Activated CD4-positive, alpha-beta T cell treated with anti-CD3 and anti-CD28 coated beads, Interleukin-2, amount 10 ng/mL, durations not matched to agents 24 days and 14 days (primary cell): ENCODE measurements at regions of chr1 and their contacts with region 1.

Region 1: DNA sequence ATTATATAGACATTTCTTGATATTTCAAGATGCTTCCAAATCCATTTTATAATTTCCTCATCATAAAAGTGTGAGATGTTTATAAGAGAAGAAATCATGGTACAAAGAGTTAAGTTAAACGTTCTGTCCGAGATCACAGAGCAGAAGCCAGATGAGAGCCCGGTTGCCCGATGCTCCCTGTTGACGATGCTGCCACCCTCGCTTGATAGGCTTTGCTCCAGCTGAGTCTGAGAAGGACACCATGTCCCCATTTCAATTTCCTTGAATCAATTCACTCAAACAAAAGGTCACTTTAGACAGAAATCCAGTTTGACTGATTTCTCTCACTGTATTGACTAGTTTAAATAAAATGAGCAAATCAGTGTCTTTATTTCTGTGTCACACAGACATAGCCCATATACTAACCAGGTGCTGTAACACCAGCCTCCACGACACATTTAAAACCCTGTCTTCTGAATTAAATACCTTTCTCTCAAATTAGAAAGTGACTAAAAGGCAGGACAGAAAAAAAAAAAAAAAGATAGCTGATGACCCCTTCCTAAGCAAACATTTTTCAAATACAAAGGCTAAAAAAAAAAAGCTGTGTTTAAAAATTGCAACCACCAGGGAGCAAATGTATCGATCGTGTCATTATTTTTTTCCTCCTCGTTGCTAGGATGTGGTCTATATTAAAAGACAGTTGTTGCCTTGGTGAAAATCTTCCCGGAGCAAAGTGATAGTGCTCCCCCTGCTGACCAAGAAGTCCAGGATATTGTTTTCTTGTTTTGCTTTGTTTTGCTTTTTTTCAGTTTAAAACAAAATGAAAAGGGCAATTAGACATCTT is 35.2 kb downstream of the DNASE2B start:
- DNase-seq: peak; percentile 90
- H3K4me3 Mint-ChIP-seq: peak overlapping the region; percentile 63
- H3K27ac Mint-ChIP-seq: peak overlapping the region; percentile 40
- H3K4me1 Mint-ChIP-seq: peaks cover 6% of the 10 kb centered on the region
- H3K27me3 Mint-ChIP-seq: peaks cover 2% of the 10 kb centered on the region

Region 2: DNA sequence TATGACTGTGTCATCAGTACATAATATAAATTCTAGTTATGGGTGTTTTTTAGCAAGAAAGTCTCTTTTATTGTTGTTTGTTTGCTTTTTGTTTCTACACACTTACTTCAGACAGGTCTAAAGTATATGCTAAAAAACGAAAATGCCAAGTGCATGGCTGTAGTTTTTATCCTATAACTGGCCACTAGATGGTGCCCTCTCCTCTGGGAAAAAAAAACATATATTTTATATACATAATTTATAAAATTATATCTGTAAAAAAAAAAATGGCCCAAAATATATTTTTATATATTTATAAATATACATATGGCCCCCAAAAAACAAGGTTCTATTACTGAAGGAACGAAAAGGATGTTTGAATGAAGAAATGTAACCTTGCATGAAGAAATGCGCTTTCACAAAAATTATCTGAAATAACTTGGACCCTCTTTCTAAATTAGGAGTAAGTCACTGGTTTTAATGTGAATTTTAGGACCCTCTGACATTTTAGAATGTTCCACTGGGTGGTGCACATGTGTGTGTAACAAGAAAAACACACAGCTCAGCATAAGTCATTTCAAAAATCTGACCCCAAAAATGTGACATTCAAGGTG is 528.1 kb before region 1 on chr1:
- intact Hi-C with region 1: loop called (anchors 5 kb)
- DNase-seq: peak; percentile 69
- H3K4me3 Mint-ChIP-seq: no peak overlapping the region
- H3K27ac Mint-ChIP-seq: no peak overlapping the region
- H3K4me1 Mint-ChIP-seq: no peaks in the 10 kb centered on the region
- H3K27me3 Mint-ChIP-seq: peaks cover 19% of the 10 kb centered on the region

Region 3: GRCh38 chr1:83931658-83932253 is 501.7 kb before region 1 on chr1:
- intact Hi-C with region 1: loop called (anchors 5 kb)
- DNase-seq: peak; percentile 76
- H3K4me3 Mint-ChIP-seq: no peak overlapping the region
- H3K27ac Mint-ChIP-seq: no peak overlapping the region
- H3K4me1 Mint-ChIP-seq: no peaks in the 10 kb centered on the region
- H3K27me3 Mint-ChIP-seq: peaks cover 27% of the 10 kb centered on the region

Region 4: GRCh38 chr1:84298328-84298683 is 135.2 kb before region 1 on chr1:
- intact Hi-C with region 1: loop called (anchors 2 kb)
- DNase-seq: peak; percentile 88
- H3K4me3 Mint-ChIP-seq: peak overlapping the region; percentile 91
- H3K27ac Mint-ChIP-seq: peak overlapping the region; percentile 85
- H3K4me1 Mint-ChIP-seq: peaks cover 33% of the 10 kb centered on the region
- H3K27me3 Mint-ChIP-seq: peaks cover 13% of the 10 kb centered on the region

Region 5: DNA sequence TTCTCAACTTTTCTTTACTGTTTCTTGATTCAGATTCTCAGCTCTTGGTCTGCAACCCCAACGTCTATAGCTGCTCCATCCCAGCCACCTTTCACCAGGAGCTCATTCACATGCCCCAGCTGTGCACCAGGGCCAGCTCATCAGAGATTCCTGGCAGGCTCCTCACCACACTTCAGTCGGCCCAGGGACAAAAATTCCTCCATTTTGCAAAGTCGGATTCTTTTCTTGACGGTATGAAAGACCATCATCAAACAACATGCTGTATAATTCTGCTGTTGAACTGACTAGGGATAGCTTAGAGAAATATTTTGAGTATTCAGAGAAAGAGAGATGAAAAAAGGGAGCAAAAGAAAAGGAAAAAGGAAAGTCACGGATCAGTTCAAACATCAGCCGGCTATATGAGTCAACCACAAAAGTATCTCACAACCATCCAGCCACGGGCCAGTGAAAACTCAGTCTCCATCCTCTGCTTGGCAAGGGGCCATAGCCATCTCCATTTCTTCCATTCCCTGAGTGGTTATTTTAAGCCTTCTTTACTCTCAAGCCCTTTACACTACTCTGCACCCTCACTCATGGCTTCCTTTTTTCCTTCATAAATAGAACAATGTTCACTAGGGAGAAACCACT is 21.0 kb before region 1 on chr1:
- intact Hi-C with region 1: no loop called
- DNase-seq: no peak
- H3K4me3 Mint-ChIP-seq: no peak overlapping the region
- H3K27ac Mint-ChIP-seq: no peak overlapping the region
- H3K4me1 Mint-ChIP-seq: no peaks in the 10 kb centered on the region
- H3K27me3 Mint-ChIP-seq: peaks cover 5% of the 10 kb centered on the region

Region 6: GRCh38 chr1:84862810-84863251 is 429.4 kb after region 1 on chr1:
- intact Hi-C with region 1: loop called (anchors 5 kb)
- DNase-seq: peak; percentile 91
- H3K4me3 Mint-ChIP-seq: peak overlapping the region; percentile 74
- H3K27ac Mint-ChIP-seq: peak overlapping the region; percentile 83
- H3K4me1 Mint-ChIP-seq: peaks cover 43% of the 10 kb centered on the region
- H3K27me3 Mint-ChIP-seq: peaks cover 1% of the 10 kb centered on the region